ENCODE measurements at regions of chr15 and their contacts with region 1.

Region 1: GRCh38 chr15:100873029-100873677 is 6.5 kb upstream of the ALDH1A3 start:
- DNase-seq: peak; percentile 71 to 77
- H3K4me3 ChIP-seq: no peak overlapping the region
- H3K4me3 Mint-ChIP-seq: no peak overlapping the region
- H3K27ac Mint-ChIP-seq: no peak overlapping the region
- H3K4me1 ChIP-seq: peaks cover 8% of the 10 kb centered on the region; the same call in 1 of the 2 replicates
- H3K4me1 Mint-ChIP-seq: peaks cover 5% of the 10 kb centered on the region
- H3K27me3 ChIP-seq: no peaks in the 10 kb centered on the region
- H3K27me3 Mint-ChIP-seq: no peaks in the 10 kb centered on the region
- CTCF ChIP-seq: peak; percentile 70 to 82

Region 2: DNA sequence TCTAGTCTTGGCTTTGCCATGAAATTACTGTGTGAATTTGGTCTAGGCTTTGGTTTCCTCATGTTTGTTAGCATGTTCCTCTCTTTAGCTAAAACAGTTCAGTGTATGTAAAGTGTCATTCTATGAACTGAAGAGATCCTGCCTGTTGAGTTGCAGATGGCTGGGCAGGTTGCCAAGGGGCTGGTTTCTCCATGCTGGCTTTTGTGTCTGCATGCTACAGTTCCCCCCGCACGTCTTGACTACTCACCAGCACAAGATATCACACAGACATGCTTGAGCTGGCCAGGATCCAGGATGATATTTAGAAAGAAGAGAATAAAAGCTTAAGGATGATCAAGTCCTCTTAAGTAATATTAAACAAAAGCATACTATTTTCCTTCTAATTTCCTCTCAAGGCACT is 434.6 kb before region 1 on chr15:
- CTCF ChIA-PET with region 1: no interaction called
- POLR2A ChIA-PET with region 1: no interaction called
- intact Hi-C with region 1: no loop called
- DNase-seq: no peak
- H3K4me3 ChIP-seq: no peak overlapping the region
- H3K4me3 Mint-ChIP-seq: no peak overlapping the region
- H3K27ac Mint-ChIP-seq: no peak overlapping the region
- H3K4me1 ChIP-seq: no peaks in the 10 kb centered on the region
- H3K4me1 Mint-ChIP-seq: no peaks in the 10 kb centered on the region
- H3K27me3 ChIP-seq: no peaks in the 10 kb centered on the region
- H3K27me3 Mint-ChIP-seq: no peaks in the 10 kb centered on the region
- CTCF ChIP-seq: no peak

Region 3: GRCh38 chr15:100627789-100628395 is 245.3 kb before region 1 on chr15:
- CTCF ChIA-PET with region 1: no interaction called
- POLR2A ChIA-PET with region 1: no interaction called
- intact Hi-C with region 1: loop called (anchors 2 kb)
- DNase-seq: peak; percentile 57 to 67
- H3K4me3 ChIP-seq: no peak overlapping the region
- H3K4me3 Mint-ChIP-seq: no peak overlapping the region
- H3K27ac Mint-ChIP-seq: no peak overlapping the region
- H3K4me1 ChIP-seq: no peaks in the 10 kb centered on the region
- H3K4me1 Mint-ChIP-seq: peaks cover 2% of the 10 kb centered on the region
- H3K27me3 ChIP-seq: no peaks in the 10 kb centered on the region
- H3K27me3 Mint-ChIP-seq: no peaks in the 10 kb centered on the region
- CTCF ChIP-seq: peak; percentile 59 to 69

Region 4: DNA sequence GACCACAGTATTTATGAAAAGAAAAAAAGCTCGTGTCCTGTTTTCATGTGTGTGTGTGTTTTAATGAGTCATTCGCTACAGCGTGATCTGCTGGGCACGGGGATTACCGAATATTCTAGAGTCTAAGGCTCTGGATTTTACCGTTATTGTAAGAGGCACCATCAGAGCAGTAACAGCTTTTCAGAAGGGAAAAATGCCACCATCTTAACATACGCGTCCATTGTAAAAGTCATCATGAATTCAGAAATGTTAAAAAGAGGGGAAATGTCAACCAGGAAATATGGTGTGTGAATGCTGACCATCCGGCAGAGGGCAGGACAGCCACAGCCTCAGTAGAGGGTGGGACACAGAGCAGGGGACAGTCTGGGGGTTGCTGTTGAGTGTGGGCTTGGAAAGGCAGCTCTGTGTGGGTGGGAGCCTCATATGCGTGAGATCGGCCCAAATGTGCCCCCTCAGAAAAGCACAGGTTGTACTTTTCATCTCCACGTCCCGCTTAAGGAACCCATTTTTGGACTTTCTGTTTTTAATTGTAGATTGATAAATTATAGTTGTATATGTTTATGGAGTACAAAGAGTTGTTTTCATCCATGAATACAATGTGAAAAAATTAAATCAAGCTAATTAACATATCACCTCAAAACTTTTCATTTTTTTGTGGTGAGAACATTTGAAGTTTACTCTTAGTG is 201.2 kb before region 1 on chr15:
- CTCF ChIA-PET with region 1: interaction called, 8 read pairs
- POLR2A ChIA-PET with region 1: no interaction called
- intact Hi-C with region 1: loop called (anchors 1 kb)
- DNase-seq: peak; percentile 52 to 66
- H3K4me3 ChIP-seq: no peak overlapping the region
- H3K4me3 Mint-ChIP-seq: peak overlapping the region; percentile 51
- H3K27ac Mint-ChIP-seq: no peak overlapping the region
- H3K4me1 ChIP-seq: 0 out of 2 replicates have a peak, but pooled peaks cover 4% of the 10 kb centered on the region
- H3K4me1 Mint-ChIP-seq: peaks cover 9% of the 10 kb centered on the region
- H3K27me3 ChIP-seq: no peaks in the 10 kb centered on the region
- H3K27me3 Mint-ChIP-seq: no peaks in the 10 kb centered on the region
- CTCF ChIP-seq: peak; percentile 59

Region 5: DNA sequence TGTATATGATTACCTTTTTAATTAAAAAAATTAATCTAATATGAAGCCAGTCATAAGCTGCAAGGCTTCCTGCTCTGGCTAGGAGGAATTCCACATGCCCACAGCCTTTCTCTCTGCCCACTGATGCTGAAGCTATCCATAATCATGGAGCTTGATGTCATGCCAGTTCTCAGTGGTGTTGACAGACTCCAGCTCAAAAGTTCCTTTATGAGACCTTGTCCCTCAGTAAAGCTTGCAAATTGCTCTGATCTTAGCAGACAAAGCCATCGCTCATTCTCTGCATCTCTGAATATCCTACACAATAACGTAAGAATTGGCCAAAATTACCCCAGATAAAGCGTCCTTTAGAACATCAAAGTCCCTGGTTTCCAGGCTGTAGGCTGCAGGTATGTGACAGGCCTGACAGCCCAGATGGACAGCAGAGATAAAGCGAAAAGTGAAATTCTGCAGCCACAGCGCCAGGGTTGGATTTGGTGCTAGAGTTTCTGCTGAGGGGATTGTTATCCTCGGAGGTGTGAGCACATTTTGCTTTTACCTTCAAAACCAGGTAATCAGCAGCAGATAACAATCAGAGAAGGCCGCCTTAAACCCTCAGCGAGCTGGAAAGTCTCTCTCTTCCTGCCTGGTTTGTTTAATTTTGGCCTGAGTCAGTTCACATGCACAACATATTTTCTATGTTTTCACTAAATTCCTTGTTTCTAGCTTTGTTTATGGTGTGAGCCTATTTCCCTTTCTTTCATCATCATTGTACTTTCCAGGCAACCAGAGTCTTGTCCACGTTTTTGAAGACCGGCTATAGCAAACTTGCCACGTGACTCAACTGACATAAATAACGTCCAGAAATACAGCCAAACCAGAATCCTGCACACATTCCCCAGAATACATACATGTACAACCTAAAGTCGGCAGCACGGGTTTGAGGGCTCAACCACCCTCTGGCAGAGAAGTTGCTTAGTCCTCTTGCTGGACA is 30.1 kb before region 1 on chr15:
- CTCF ChIA-PET with region 1: interaction called, 10 read pairs
- POLR2A ChIA-PET with region 1: no interaction called
- intact Hi-C with region 1: loop called (anchors 2 kb)
- DNase-seq: peak; percentile 53 to 65
- H3K4me3 ChIP-seq: no peak overlapping the region
- H3K4me3 Mint-ChIP-seq: no peak overlapping the region
- H3K27ac Mint-ChIP-seq: peak overlapping the region; percentile 36
- H3K4me1 ChIP-seq: peaks cover 14% of the 10 kb centered on the region; the same call in 1 of the 2 replicates
- H3K4me1 Mint-ChIP-seq: no peaks in the 10 kb centered on the region
- H3K27me3 ChIP-seq: no peaks in the 10 kb centered on the region
- H3K27me3 Mint-ChIP-seq: no peaks in the 10 kb centered on the region
- CTCF ChIP-seq: no peak

Region 6: GRCh38 chr15:101008158-101009139 is 135.3 kb after region 1 on chr15:
- CTCF ChIA-PET with region 1: no interaction called
- POLR2A ChIA-PET with region 1: no interaction called
- intact Hi-C with region 1: loop called (anchors 1 kb)
- DNase-seq: peak; percentile 53 to 71
- H3K4me3 ChIP-seq: no peak overlapping the region
- H3K4me3 Mint-ChIP-seq: no peak overlapping the region
- H3K27ac Mint-ChIP-seq: no peak overlapping the region
- H3K4me1 ChIP-seq: peaks cover 14% of the 10 kb centered on the region; the same call in 1 of the 2 replicates
- H3K4me1 Mint-ChIP-seq: peaks cover 12% of the 10 kb centered on the region
- H3K27me3 ChIP-seq: no peaks in the 10 kb centered on the region
- H3K27me3 Mint-ChIP-seq: no peaks in the 10 kb centered on the region
- CTCF ChIP-seq: peak; percentile 72 to 85

Measured in Caco-2 (cell line).